ENCODE measurements at regions of chr11 and their contacts with region 1.

Region 1: GRCh38 chr11:36702330-36703055 is 104.5 kb upstream of the RAG2 start:
- DNase-seq: peak; percentile 69
- ATAC-seq: peak; percentile 93
- H3K4me3 ChIP-seq: no peak overlapping the region
- H3K27ac ChIP-seq: no peak overlapping the region
- H3K4me1 ChIP-seq: no peaks in the 10 kb centered on the region
- H3K27me3 ChIP-seq: peaks cover 42% of the 10 kb centered on the region
- CTCF ChIP-seq: peak; percentile 86

Region 2: GRCh38 chr11:36713715-36714114 is 11.2 kb after region 1 on chr11:
- CTCF ChIA-PET with region 1: no interaction called
- POLR2A ChIA-PET with region 1: no interaction called
- intact Hi-C with region 1: no loop called
- DNase-seq: no peak
- ATAC-seq: no peak
- H3K4me3 ChIP-seq: no peak overlapping the region
- H3K27ac ChIP-seq: no peak overlapping the region
- H3K4me1 ChIP-seq: no peaks in the 10 kb centered on the region
- H3K27me3 ChIP-seq: peaks cover 35% of the 10 kb centered on the region
- CTCF ChIP-seq: no peak

Region 3: DNA sequence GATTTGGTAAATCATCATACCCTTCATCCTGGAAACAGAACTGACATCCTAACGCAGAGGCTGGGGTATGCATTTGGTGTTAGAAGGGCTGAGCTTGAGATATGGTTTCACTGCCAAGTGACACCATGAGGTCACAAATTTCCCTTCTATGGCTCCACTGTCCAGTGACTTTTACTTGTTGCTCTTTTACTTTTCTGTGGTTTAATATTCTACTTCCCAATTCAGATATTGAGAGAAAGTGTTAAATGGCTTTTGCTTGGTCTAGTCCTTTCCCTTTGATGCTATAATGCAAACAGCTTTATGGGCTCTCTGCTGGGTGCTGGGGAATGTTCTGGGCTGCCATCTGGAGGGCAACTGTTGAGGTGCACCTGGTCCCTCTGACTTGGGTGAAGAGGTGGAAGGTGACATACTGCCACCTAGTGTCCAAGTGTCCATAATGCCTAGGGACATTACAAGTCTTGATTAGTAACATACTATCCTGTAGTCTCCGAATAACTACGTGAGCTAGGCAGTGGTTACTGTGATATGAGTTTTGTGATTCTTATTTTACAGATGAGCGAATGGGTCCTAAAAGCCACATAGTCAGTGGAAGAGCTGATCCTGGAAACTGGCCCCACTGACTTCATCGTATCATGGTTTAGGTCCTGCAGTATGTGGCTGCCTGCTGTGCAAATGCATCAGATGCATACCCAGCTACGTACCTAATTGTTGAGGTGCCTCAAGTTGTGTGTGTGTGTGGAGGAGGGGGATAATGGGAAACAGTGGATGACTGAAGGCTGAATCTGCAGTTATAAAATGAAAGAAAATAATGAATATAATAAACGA is 44.6 kb after region 1 on chr11:
- CTCF ChIA-PET with region 1: interaction called, 28 read pairs
- POLR2A ChIA-PET with region 1: no interaction called
- intact Hi-C with region 1: loop called (anchors 1 kb)
- DNase-seq: peak; percentile 91
- ATAC-seq: peak; percentile 98
- H3K4me3 ChIP-seq: no peak overlapping the region
- H3K27ac ChIP-seq: no peak overlapping the region
- H3K4me1 ChIP-seq: no peaks in the 10 kb centered on the region
- H3K27me3 ChIP-seq: peaks cover 31% of the 10 kb centered on the region
- CTCF ChIP-seq: peak; percentile 96

Measured in PC-3 (cell line).